Kidney (tissue), 22 donors: ENCODE measurements at regions of chr18 and their contacts with region 1.

Region 1: DNA sequence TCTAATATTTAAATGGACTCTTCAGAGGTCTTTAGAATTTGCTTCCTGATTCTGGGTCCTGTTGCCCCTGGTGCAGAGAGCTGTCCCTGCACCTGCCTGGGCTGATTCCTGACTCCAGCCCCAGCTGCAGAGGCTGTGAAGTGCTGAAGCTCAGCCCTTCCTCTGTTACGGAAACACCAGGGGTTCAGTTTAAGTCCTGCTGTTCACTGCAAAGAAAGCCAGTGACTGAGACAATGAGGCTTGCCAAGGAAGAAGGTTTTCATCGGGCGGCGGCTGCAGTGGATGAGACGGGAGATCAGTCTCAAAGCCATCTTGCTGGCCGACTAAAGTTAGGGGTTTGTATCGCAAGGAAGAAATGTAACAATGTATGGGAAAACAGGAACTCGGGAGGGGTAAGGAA is 142.4 kb upstream of the ZNF236 start:
- DNase-seq: no peak
- H3K4me3 ChIP-seq: no peak overlapping the region
- H3K27ac ChIP-seq: no peak overlapping the region
- H3K4me1 ChIP-seq: no peaks in the 10 kb centered on the region
- H3K27me3 ChIP-seq: no peaks in the 10 kb centered on the region
- CTCF ChIP-seq: no peak

Region 2: DNA sequence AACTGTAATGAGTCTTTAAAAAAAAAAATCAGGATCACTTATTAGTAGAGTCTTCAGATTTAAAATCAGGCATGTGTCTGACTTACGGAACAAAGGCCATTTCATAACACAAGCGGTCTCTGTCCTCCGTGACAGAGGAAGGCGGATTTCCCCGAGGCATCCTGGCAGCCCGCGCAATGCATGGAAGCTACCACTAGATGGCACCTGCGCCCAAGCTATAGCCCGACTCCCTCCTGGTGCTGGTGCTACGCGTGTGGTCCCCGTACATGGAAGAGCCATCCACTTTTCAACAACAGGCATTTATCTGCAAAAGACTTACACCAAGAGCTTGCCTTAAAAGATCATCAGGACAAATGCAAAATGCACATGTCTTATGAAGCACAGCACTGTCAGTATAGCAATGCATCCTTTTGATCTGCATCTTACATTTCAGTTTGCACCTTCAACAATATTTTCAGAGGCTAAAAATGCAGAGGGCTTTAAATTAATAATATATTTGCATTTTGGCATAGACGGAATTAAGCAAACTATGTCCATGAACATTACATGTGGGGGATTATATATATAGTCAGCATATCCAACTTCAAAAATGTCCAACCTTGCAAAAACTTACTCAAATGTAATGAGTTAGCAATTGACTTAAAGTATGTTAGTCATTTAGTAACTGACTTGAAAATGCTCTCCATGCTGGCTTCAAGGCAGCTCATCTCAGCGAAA is 280.9 kb before region 1 on chr18:
- intact Hi-C with region 1: loop called (anchors 5 kb)
- DNase-seq: peak; percentile 82 to 92 (median 87)
- H3K4me3 ChIP-seq: no peak overlapping the region
- H3K27ac ChIP-seq: no peak overlapping the region
- H3K4me1 ChIP-seq: peaks cover 0 to 4% (median 2%) of the 10 kb centered on the region in 3 donors
- H3K27me3 ChIP-seq: no peaks in the 10 kb centered on the region
- CTCF ChIP-seq: peak; percentile 98